A549 (cell line): ENCODE measurements at regions of chr12 and their contacts with region 1.

Region 1: GRCh38 chr12:13981990-13982389 is 588 bp upstream of the GRIN2B start:
- DNase-seq: peak; percentile 55 to 81
- ATAC-seq: peak; percentile 84 to 87
- H3K4me3 ChIP-seq: peak overlapping the region; percentile 61
- H3K27ac ChIP-seq: peak overlapping the region; percentile 76 to 89
- H3K4me1 ChIP-seq: peaks cover 16% of the 10 kb centered on the region; the same call in 2 of the 3 replicates
- CTCF ChIP-seq: peak; percentile 83
- EP300 ChIP-seq: no peak
- POLR2A ChIP-seq: no peak
- RAD21 ChIP-seq: peak; percentile 79 to 95

Region 2: DNA sequence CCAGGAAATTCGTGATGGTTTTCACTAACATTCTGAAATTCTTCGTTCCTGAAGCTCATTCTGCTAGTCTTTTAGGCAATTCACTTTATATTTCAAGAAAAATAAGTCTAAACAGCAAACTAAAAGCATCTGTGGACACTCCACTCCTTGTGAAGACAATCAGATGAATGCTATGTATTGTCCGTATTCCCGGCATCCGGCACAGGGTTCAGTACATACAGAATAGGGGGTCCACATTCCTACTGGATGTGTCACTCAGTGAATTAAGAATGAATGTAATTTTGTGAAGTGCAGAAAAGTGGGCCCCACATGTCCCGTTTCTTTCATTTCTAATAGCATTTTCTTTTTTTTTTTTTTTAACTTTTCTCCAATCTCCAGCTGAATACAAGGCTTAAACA is 241.8 kb before region 1 on chr12:
- CTCF ChIA-PET with region 1: interaction called, 19 read pairs
- POLR2A ChIA-PET with region 1: no interaction called
- DNase-seq: no peak
- ATAC-seq: peak in 1 of 2 experiments; percentile 8; a peak in 2 of 6 replicates
- H3K4me3 ChIP-seq: no peak overlapping the region
- H3K27ac ChIP-seq: peak overlapping the region in 1 of 2 experiments; percentile 42; a peak in 2 of 6 replicates
- H3K4me1 ChIP-seq: peaks cover 18% of the 10 kb centered on the region; the same call in 2 of the 3 replicates
- CTCF ChIP-seq: no peak
- EP300 ChIP-seq: no peak
- POLR2A ChIP-seq: no peak
- RAD21 ChIP-seq: no peak

Region 3: DNA sequence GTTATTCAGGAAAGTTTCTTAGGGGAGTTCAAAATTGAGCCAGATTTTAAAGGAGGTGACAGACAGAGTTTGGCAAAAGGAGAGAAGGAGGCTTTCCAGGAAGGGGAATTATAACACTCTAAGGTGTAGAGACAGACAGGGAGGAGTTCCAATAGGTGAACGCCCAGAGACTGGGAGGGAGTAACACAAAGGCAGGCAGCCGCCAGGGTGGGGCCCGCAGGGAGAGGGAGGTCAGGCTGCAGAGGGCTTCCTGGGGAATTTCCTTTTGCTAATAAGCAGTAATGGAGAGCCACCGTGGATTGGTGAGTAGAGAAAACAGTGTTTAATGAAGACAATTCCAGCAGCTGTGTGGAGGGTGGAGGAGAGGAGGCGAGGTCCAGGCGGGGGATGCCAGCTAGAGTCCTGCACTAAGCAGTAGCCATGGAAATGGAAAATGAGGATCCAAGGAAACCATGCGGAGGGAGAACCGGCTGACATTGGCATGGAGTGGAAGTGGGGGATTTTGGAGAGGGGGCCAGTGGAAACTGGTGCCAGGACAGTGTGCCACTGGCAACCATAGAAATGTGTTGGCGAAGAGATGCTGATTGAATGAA is 22.8 kb before region 1 on chr12:
- CTCF ChIA-PET with region 1: interaction called, 13 read pairs
- POLR2A ChIA-PET with region 1: interaction called, 10 read pairs
- DNase-seq: peak in 1 of 2 experiments; percentile 50
- ATAC-seq: peak in 1 of 2 experiments; percentile 42; a peak in 3 of 6 replicates
- H3K4me3 ChIP-seq: peak overlapping the region; percentile 9; the same call in 1 of the 3 replicates
- H3K27ac ChIP-seq: peak overlapping the region; percentile 38 to 92; a peak in 5 of 6 replicates
- H3K4me1 ChIP-seq: peaks cover 57% of the 10 kb centered on the region
- CTCF ChIP-seq: no peak
- EP300 ChIP-seq: no peak
- POLR2A ChIP-seq: no peak
- RAD21 ChIP-seq: no peak

Region 4: GRCh38 chr12:13992106-13992505 is 10.1 kb after region 1 on chr12:
- CTCF ChIA-PET with region 1: interaction called, 15 read pairs
- POLR2A ChIA-PET with region 1: no interaction called
- DNase-seq: no peak
- ATAC-seq: no peak
- H3K4me3 ChIP-seq: no peak overlapping the region
- H3K27ac ChIP-seq: no peak overlapping the region
- H3K4me1 ChIP-seq: peaks cover 10% of the 10 kb centered on the region; the same call in 1 of the 3 replicates
- CTCF ChIP-seq: no peak
- EP300 ChIP-seq: no peak
- POLR2A ChIP-seq: no peak
- RAD21 ChIP-seq: no peak

Region 5: DNA sequence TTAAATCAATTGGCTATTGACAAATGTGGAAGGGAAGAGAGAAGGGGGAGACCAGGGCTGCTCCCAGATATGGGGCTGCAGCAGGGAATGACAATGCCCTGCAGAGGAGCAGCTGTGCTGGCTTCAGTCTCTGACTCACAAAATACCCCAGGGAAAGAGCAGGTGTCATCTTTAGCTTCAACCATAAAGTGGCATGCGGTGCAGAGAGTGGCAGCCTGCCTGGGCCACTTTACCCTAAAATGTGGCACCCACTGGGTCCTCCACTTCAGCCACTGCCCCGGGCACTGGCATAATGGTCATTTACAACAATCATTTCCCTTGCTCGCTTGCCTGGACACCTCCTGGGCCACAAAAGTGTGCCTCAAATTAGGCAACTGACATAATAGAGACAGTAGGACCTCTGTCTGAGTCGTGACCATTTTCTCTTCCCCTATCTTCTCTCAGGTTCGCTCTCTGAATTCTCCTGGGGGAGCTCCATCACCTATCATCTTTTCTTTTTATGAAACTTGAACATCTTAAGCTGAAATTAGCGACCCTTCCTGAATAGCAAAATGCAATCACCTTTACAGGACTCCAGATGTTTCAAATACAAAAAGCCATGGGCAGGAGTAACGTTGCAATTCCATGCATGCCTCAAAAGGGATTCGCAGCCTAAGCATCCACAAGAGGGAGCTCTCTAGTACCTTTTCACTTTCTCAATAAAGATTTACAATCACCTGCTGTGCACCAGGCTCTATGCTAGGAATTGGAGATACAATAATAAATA is 203.6 kb after region 1 on chr12:
- CTCF ChIA-PET with region 1: no interaction called
- POLR2A ChIA-PET with region 1: no interaction called
- DNase-seq: peak; percentile 46 to 49
- ATAC-seq: peak; percentile 74 to 88
- H3K4me3 ChIP-seq: no peak overlapping the region
- H3K27ac ChIP-seq: no peak overlapping the region
- H3K4me1 ChIP-seq: no peaks in the 10 kb centered on the region
- CTCF ChIP-seq: peak; percentile 75
- EP300 ChIP-seq: no peak
- POLR2A ChIP-seq: no peak
- RAD21 ChIP-seq: peak; percentile 57 to 66; a peak in 4 of 5 replicates